ENCODE measurements at regions of chr5 and their contacts with region 1.

Region 1: DNA sequence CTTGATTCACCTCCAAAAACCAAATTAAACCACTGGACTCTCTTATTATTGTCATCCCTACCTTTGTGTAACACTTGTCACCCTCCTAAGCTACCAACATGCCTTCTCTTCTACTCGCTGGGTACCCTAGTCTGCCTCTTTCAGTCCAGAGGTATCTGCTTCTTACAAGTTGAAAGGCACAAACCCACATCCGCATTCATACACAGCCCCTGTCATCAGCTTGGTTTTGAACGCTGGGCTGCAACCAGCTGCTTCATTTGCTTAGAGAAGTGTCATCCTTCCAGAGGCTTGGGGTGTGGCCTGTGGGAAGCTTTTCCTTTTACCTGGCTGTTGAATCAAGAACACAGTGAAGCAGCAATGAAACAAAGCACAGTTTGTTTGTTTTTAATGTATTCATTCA is 138.8 kb upstream of the WWC1 start:
- DNase-seq: no peak
- ATAC-seq: no peak
- H3K4me3 ChIP-seq: no peak overlapping the region
- H3K27ac ChIP-seq: no peak overlapping the region
- H3K4me1 ChIP-seq: peaks cover 0 to 42% (median 20%) of the 10 kb centered on the region in 9 donors
- H3K27me3 ChIP-seq: peaks cover 0 to 5% (median 0%) of the 10 kb centered on the region in 7 donors
- CTCF ChIP-seq: no peak

Region 2: DNA sequence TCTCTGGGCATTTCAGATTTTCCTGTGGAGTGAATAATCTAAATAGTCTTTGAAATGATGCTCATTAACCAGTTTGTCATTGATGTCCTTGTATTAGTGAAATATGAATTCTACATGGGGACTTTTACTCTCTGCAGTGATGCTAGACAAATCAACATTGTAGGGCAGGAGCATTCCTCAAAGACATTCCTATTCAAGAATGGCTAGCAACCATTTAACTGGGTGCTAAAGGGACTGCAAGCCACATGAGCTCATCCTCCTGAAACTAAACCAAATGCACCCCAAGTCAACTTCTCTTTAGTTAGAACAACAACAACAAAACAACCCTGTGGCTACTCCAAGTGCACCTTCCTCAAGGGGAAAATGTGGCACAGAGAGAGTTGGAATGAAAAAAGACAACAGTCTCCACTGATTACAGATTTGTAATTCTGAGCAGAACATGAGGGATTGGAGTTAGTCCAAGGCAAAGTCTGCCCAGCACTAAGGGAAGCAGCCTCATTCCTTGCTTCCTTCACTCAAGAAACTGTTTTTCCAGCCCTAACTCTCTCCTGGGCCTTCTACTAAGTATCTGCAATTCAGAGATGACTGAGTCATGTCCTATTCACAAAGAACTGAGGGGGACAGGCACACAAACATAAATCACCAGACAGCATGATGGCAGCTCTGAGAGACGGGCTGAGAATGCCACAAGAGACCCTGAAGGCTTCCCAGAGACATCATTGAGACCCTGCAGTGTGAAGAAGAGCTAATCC is 56.8 kb after region 1 on chr5:
- intact Hi-C with region 1: loop called in 1 of 10 experiments (anchors 5 kb)
- DNase-seq: no peak
- ATAC-seq: peak in 2 of 8 donors; percentile 7 to 20
- H3K4me3 ChIP-seq: no peak overlapping the region
- H3K27ac ChIP-seq: peak overlapping the region in 6 of 10 donors; percentile 5 to 63 (median 31)
- H3K4me1 ChIP-seq: peaks cover 0 to 17% (median 7%) of the 10 kb centered on the region in 9 donors
- H3K27me3 ChIP-seq: no peaks in the 10 kb centered on the region
- CTCF ChIP-seq: no peak

Region 3: DNA sequence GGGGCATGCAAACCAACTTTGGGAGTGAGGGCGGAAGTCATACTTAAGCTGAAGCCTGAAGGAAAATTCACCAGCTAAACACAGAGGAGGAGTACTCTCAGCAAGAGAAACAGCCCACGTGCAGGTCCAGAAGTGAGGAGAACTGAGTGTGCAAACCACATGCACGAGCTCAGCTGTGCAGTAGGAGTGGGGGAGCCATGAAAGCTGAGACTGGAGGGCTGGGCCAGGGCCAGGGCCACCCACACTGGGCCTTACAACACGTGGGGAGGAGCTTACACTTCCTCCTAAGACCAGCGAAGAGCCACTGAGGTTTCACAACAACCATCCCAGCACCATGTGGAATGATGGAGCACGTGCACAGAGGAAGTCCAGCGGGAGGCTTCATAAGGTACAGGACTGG is 129.5 kb after region 1 on chr5:
- intact Hi-C with region 1: no loop called
- DNase-seq: no peak
- ATAC-seq: peak in 2 of 8 donors; percentile 34 to 44
- H3K4me3 ChIP-seq: no peak overlapping the region
- H3K27ac ChIP-seq: no peak overlapping the region
- H3K4me1 ChIP-seq: no peaks in the 10 kb centered on the region
- H3K27me3 ChIP-seq: peaks cover 0 to 21% (median 0%) of the 10 kb centered on the region in 7 donors
- CTCF ChIP-seq: no peak

Measured in heart right ventricle (tissue), 16 donors.